Activated CD4-positive, alpha-beta memory T cell treated with anti-CD3 and anti-CD28 coated beads for 36 hours (primary cell): ENCODE measurements at regions of chr12 and their contacts with region 1.

Region 1: GRCh38 chr12:6764011-6764828 is 1.9 kb upstream of the PTMS start:
- DNase-seq: peak; percentile 72
- H3K4me3 Mint-ChIP-seq: peak overlapping the region; percentile 40
- H3K27ac Mint-ChIP-seq: no peak overlapping the region
- H3K4me1 Mint-ChIP-seq: peaks cover 29% of the 10 kb centered on the region
- H3K27me3 Mint-ChIP-seq: peaks cover 24% of the 10 kb centered on the region

Region 2: DNA sequence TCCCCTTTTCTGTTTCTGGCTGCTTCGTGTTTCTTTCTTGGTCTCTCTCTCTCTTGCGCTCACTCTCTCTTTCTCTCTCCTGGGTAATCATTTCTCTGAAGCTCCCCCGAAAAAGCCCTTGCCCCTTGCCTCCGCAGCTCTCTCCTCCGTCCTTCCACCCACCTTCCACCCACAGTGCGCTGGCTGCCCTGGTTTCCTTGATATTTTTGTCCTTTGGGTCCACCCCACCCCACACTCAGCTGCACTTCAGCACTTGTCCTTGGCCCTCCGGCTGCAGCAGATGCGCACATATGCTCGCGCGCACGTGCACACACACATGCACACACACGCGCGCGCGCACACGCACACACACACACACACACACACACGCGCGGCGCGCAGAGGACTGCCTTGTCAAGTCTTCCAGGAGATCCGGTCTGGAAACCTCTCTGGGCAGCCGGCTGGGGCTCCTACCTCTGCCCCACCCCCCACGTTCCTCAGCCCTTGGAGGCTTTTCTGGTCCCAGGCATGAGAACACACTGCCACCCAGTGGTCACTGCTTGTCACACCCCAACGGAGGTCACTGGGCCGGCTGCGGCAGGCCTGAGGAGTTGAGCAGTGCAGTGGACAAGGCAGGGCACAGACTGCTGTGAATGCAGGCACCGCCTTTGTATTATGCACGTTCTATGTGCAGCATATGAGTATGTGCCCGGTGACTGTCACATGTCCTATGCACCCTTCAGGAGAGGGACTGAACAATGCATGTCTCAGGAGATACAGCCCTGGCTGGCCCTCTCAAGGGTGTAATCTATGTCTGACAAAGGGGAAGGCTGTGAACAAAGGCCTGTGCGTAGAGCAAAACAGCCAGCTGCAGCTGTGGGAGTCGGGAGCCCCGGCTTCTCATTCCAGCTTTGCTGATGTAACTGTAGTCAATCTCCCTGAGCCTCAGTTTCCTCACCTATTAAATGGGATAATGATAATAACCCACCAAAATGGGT is 14.6 kb after region 1 on chr12:
- CTCF ChIA-PET with region 1: interaction called, 51 read pairs
- POLR2A ChIA-PET with region 1: interaction called, 6 read pairs
- intact Hi-C with region 1: loop called (anchors 1 kb)
- DNase-seq: peak; percentile 94
- H3K4me3 Mint-ChIP-seq: peak overlapping the region; percentile 67
- H3K27ac Mint-ChIP-seq: peak overlapping the region; percentile 46
- H3K4me1 Mint-ChIP-seq: peaks cover 77% of the 10 kb centered on the region
- H3K27me3 Mint-ChIP-seq: no peaks in the 10 kb centered on the region

Region 3: GRCh38 chr12:6786416-6787094 is 22.3 kb after region 1 on chr12:
- CTCF ChIA-PET with region 1: interaction called, 47 read pairs
- POLR2A ChIA-PET with region 1: interaction called, 19 read pairs
- intact Hi-C with region 1: no loop called
- DNase-seq: peak; percentile 34
- H3K4me3 Mint-ChIP-seq: peak overlapping the region; percentile 51
- H3K27ac Mint-ChIP-seq: peak overlapping the region; percentile 81
- H3K4me1 Mint-ChIP-seq: peaks cover 62% of the 10 kb centered on the region
- H3K27me3 Mint-ChIP-seq: no peaks in the 10 kb centered on the region

Region 4: DNA sequence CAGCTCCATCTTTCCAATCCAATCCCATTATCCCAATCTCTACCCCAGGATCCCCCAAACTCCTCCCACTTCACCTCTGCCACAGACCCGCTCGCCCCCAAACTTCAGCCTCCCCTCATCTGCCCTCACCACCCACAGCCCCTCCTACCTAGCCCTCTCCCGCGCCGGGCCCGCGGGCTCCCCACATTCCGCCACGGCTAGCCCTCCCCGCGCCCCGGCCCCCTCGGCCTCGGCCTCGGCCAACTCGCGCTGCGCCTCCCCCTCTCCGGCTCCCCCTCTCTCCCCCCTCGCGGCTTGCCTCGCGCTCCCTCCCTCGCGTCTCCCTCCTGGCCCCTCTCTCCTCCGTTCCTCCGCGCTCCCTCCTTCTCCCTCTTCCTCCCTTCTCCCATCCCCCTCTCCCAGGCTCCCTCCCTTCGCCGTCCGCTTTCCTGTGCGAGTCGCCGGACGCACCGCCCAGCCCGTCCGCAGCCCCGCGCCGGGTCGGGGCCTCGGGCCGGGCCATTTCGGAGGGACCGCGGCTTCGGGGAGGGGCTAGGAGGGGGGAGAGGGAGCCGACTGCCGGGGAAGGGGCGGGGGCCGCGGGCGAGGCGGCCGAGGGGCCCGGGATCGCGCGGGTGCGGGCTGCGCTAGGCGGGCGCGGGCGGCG is 163.3 kb after region 1 on chr12 and contains the start of gene ATN1:
- CTCF ChIA-PET with region 1: no interaction called
- POLR2A ChIA-PET with region 1: no interaction called
- intact Hi-C with region 1: no loop called
- DNase-seq: peak; percentile 61
- H3K4me3 Mint-ChIP-seq: peak within 1 kb of the TSS; percentile 84
- H3K27ac Mint-ChIP-seq: peak within 1 kb of the TSS; percentile 89
- H3K4me1 Mint-ChIP-seq: peaks cover 64% of the 10 kb centered on the region
- H3K27me3 Mint-ChIP-seq: no peaks in the 10 kb centered on the region
- total RNA-seq, gene ATN1: 34.8 to 37.8 TPM

Region 5: DNA sequence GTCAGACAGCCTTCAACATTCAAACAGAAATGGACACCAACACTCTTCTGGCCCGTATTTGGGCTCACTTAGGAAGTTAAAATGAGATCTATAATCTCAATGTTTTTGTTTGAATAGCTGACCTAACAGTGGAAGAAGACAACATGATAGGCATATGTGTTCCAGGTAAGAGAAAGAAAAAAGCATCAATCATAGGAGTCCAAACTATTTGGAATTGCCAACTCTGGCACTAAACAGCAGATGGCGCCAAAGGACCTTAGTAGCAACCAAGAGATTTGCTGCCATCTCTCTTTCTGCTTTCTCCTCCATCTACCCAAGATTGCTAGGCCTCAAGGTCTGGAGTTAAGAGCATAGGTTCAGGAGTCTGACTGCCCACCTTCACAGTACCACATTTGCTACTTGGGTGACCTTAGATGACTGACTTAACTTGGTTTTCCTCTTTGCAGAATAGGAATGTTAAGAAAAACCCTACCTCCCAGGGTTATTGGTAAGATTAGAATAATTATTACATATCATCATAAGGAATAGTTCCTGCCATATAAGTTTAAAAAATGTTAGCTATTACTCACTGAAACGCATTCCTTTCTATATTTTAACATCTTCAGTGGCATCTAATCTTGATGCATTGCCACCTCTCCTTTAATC is 455.5 kb after region 1 on chr12:
- CTCF ChIA-PET with region 1: no interaction called
- POLR2A ChIA-PET with region 1: no interaction called
- intact Hi-C with region 1: no loop called
- DNase-seq: peak; percentile 77
- H3K4me3 Mint-ChIP-seq: no peak overlapping the region
- H3K27ac Mint-ChIP-seq: no peak overlapping the region
- H3K4me1 Mint-ChIP-seq: no peaks in the 10 kb centered on the region
- H3K27me3 Mint-ChIP-seq: no peaks in the 10 kb centered on the region